Thyroid gland (tissue), 4 donors: ENCODE measurements at regions of chr11 and their contacts with region 1.

Region 1: GRCh38 chr11:128630367-128631230 is 43.2 kb upstream of the ETS1 start:
- DNase-seq: peak; percentile 82 to 90
- H3K4me3 ChIP-seq: no peak overlapping the region
- H3K27ac ChIP-seq: peak overlapping the region in 1 of 3 donors; percentile 10
- H3K4me1 ChIP-seq: peaks cover 0 to 10% of the 10 kb centered on the region in 2 donors
- H3K27me3 ChIP-seq: no peaks in the 10 kb centered on the region
- CTCF ChIP-seq: peak; percentile 72 to 93 (median 85)
- POLR2A ChIP-seq: no peak

Region 2: GRCh38 chr11:128172046-128172878 is 458.3 kb before region 1 on chr11:
- intact Hi-C with region 1: loop called (anchors 2 kb)
- DNase-seq: peak; percentile 83 to 89
- H3K4me3 ChIP-seq: no peak overlapping the region
- H3K27ac ChIP-seq: no peak overlapping the region
- H3K4me1 ChIP-seq: no peaks in the 10 kb centered on the region
- H3K27me3 ChIP-seq: no peaks in the 10 kb centered on the region
- CTCF ChIP-seq: peak; percentile 58 to 89 (median 74)
- POLR2A ChIP-seq: no peak